ENCODE measurements at regions of chr13 and their contacts with region 1.

Region 1: DNA sequence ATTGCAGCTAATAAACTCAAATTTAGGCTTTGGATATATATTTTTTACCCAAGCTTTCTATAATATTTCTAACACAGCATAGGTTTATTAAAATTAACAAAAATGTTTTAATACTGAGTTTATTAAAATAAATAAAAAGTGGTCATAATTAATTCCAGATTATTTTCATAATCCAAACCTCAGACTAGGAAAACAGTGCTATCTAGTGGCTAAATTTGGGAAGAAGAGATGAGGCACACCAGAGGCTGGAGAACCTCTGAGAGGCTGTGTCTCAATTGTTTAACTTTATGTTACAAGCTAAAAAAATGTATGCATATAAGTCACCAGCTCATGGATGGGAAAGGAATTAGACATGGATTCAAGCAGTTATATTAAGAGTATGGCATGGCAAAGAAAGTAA is 392.5 kb downstream of the DIAPH3 start:
- DNase-seq: no peak

Region 2: GRCh38 chr13:59391696-59392095 is 379.6 kb before region 1 on chr13:
- intact Hi-C with region 1: loop called (anchors 10 kb)
- DNase-seq: no peak

Region 3: DNA sequence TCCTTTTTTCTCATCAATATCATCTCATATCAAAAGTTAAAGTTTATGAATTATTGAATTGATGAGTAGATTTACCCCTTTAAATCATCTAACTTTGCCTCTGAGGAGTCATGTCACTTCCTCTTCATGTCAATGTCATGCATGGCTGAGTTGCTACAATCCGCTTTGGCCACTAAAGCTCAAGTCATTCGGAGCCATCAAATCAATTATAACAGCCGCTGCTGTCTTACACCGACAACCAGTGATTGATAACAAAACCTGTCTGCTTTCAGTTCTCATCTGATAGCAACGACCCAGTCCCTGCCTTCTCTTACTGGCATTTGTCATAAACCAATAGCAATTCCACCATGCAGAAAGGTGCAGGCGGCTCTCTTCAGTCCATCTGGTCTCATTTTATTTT is 36.9 kb before region 1 on chr13:
- intact Hi-C with region 1: no loop called
- DNase-seq: no peak